Activated CD8-positive, alpha-beta memory T cell treated with anti-CD3 and anti-CD28 coated beads, Interleukin-2, amount 10 ng/mL, durations not matched to agents 7 days and 5 days (primary cell): ENCODE measurements at regions of chr12 and their contacts with region 1.

Region 1: GRCh38 chr12:6890789-6891645 is 13.6 kb upstream of the LRRC23 start:
- DNase-seq: peak; percentile 99
- ATAC-seq: peak; percentile 95
- H3K4me3 Mint-ChIP-seq: peak overlapping the region; percentile 80
- H3K27ac Mint-ChIP-seq: peak overlapping the region; percentile 93
- H3K4me1 Mint-ChIP-seq: peaks cover 29% of the 10 kb centered on the region
- H3K27me3 Mint-ChIP-seq: no peaks in the 10 kb centered on the region

Region 2: GRCh38 chr12:6904280-6905278 is 13.6 kb after region 1 on chr12 and contains the start of gene LRRC23:
- CTCF ChIA-PET with region 1: interaction called, 28 read pairs
- DNase-seq: peak; percentile 99
- ATAC-seq: peak; percentile 98
- H3K4me3 Mint-ChIP-seq: no peak within 1 kb of the TSS
- H3K27ac Mint-ChIP-seq: no peak within 1 kb of the TSS
- H3K4me1 Mint-ChIP-seq: peaks cover 3% of the 10 kb centered on the region
- H3K27me3 Mint-ChIP-seq: no peaks in the 10 kb centered on the region
- total RNA-seq, gene LRRC23: 4.9 to 8.7 TPM

Region 3: DNA sequence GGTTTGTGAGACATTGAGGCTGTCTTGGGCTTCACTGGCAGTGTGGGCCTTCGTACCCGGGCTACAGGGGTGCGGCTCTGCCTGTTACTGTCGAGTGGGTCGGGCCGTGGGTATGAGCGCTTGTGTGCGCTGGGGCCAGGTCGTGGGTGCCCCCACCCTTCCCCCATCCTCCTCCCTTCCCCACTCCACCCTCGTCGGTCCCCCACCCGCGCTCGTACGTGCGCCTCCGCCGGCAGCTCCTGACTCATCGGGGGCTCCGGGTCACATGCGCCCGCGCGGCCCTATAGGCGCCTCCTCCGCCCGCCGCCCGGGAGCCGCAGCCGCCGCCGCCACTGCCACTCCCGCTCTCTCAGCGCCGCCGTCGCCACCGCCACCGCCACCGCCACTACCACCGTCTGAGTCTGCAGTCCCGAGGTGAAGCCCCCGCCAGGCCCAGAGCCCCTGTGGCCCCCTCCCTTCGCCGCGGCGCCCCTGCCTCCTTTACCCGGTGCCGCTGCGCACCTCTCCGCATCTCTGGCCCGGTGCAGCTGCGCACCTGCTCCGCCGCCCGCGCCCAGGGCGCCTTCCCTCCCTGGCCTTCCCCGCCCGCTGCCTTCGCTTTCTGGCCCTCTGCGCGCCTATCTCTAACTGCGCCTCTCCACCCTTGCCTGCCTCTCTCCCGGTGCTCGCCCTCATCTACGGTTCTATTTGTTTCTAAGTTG is 23.4 kb after region 1 on chr12 and contains the start of gene ENO2:
- CTCF ChIA-PET with region 1: interaction called, 16 read pairs
- DNase-seq: peak; percentile 89
- ATAC-seq: peak; percentile 96
- H3K4me3 Mint-ChIP-seq: peak within 1 kb of the TSS; percentile 92
- H3K27ac Mint-ChIP-seq: peak within 1 kb of the TSS; percentile 86
- H3K4me1 Mint-ChIP-seq: peaks cover 45% of the 10 kb centered on the region
- H3K27me3 Mint-ChIP-seq: no peaks in the 10 kb centered on the region
- total RNA-seq, gene ENO2: 106 to 171 TPM